GM10248 (cell line): ENCODE measurements at regions of chrX and their contacts with region 1.

Region 1: GRCh38 chrX:47836164-47837072 is at the start of gene ZNF81:
- DNase-seq: peak; percentile 83
- CTCF ChIP-seq: no peak

Region 2: DNA sequence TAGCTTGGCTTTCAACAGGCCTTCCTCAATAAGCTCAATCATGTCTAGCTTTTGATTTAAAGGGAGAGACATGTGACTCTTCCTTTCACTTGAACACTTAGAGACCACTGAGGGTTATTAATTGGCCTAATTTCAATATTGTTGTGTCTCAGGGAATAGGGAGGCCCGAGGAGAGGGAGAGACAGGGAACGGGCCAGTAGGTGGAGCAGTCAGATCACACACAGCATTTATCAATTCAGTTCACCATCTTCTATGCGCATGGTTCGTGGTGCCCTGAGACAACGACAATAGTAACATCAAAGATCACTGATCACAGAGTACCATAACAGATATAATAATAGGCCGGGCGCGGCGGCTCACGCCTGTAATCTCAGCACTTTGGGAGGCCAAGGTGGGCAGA is 18.1 kb after region 1 on chrX:
- CTCF ChIA-PET with region 1: interaction called, 10 read pairs
- POLR2A ChIA-PET with region 1: no interaction called
- DNase-seq: no peak
- CTCF ChIP-seq: peak; percentile 12

Region 3: GRCh38 chrX:47900833-47901232 is 64.4 kb after region 1 on chrX:
- CTCF ChIA-PET with region 1: no interaction called
- POLR2A ChIA-PET with region 1: no interaction called
- DNase-seq: peak; percentile 5
- CTCF ChIP-seq: no peak